Sigmoid colon (tissue), 7 donors: ENCODE measurements at regions of chr13 and their contacts with region 1.

Region 1: GRCh38 chr13:52652196-52652979 is at the start of gene SUGT1:
- DNase-seq: peak; percentile 98
- H3K4me3 ChIP-seq: peak within 1 kb of the TSS; percentile 70 to 85 (median 74)
- H3K27ac ChIP-seq: peak within 1 kb of the TSS; percentile 93 to 95 (median 94)
- H3K4me1 ChIP-seq: peaks cover 0 to 45% (median 33%) of the 10 kb centered on the region in 4 donors
- H3K27me3 ChIP-seq: no peaks in the 10 kb centered on the region
- CTCF ChIP-seq: peak in 2 of 4 experiments; percentile 61 to 64
- EP300 ChIP-seq: peak in 1 of 4 donors; percentile 37
- POLR2A ChIP-seq: peak; percentile 72 to 73
- total RNA-seq, gene SUGT1: 21.9 to 48.5 (median 39.4) TPM

Region 2: DNA sequence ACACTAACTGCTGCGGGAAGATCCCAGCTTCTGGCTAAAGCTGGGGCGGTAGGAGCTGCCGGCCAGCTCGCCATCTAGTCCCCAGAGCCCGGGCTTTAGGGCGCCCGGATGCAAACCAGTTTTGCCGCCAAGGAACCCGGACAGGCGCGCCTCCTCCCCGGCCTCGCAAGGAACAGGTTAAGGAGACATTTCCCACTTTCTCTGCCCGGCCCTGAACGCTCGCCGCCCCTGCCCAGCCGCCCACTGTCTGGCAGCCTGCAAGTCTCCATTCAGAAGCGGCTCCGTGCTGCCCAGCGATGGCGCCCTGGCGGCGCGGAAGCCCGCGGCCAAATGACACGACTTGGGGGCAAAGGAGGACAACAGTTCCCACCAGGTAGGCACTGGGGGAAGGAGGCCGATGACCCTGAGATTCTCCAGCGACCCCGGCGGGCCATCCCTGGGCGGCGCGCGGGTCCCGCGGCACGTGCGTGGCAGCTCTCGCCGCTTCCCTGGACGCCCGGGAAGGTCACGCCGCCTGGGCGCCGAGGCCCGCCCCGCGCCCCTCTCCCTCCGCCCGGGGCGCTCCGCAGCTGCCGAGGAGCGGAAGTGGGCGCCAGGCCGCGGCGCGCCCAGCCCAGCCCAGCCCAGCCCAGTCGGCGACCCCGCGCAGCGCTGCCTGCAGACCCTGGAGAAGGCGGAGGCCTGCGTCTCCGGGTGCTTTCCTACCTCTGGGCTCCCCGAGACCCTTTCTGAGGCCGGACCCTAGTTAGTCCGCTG is 52.4 kb before region 1 on chr13:
- intact Hi-C with region 1: loop called (anchors 2 kb)
- DNase-seq: no peak
- H3K4me3 ChIP-seq: peak overlapping the region; percentile 55 to 75 (median 66)
- H3K27ac ChIP-seq: peak overlapping the region; percentile 72 to 86 (median 82)
- H3K4me1 ChIP-seq: peaks cover 0 to 11% (median 9%) of the 10 kb centered on the region in 4 donors
- H3K27me3 ChIP-seq: no peaks in the 10 kb centered on the region
- CTCF ChIP-seq: no peak
- EP300 ChIP-seq: no peak
- POLR2A ChIP-seq: no peak

Region 3: DNA sequence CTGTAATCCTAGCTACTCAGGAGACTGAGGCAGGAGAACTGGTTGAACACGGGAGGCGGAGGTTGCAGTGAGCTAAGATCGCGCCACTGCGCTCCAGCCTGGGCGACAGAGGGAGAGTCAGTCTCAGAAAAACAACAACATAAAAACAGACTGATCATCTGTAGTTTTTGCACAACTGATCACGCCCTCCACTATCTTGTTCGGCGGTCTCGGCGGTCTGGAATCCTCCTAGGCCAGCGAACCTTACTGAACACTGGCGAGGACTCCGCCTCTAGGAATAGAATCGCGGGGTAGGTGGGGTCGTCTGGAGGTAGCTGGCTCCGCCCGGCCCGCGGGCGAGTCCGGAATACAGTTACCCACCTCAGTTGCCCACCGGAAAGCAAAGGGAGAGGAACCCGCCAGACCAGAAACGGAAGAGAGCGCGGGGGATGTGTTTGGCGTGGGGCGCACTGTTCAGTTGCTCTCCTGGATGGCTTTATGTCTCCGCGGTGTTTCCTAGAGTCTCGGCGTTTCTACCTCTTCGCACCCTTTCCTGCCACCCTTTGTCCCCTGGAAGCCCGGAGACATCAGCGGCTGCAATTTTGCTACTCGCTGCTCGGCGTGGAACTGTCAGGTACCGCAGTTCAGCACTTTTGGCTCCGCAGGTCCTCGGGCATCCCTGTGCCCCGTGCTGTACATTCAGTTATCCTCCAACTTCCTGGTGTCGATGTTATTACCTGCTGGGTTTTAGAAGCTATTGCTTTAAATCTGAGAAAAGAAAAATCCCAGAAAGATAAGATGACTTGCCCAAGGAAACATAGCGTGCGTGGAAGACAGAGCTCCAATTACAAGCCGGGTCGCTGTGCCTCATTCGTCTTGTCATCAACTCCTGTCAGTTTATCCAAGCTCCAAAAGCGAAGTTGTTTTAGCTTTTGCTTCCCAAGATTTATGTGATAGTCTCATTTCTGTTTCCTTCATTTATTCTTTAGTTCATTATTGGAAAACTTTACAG is 35.0 kb before region 1 on chr13:
- intact Hi-C with region 1: loop called (anchors 5 kb)
- DNase-seq: peak; percentile 89
- H3K4me3 ChIP-seq: peak overlapping the region; percentile 53 to 72 (median 63)
- H3K27ac ChIP-seq: peak overlapping the region; percentile 79 to 86 (median 84)
- H3K4me1 ChIP-seq: peaks cover 0 to 14% (median 7%) of the 10 kb centered on the region in 4 donors
- H3K27me3 ChIP-seq: no peaks in the 10 kb centered on the region
- CTCF ChIP-seq: no peak
- EP300 ChIP-seq: no peak
- POLR2A ChIP-seq: peak in 1 of 2 donors; percentile 8